ENCODE measurements at regions of chr16 and their contacts with region 1.

Region 1: GRCh38 chr16:72241930-72242329 is 70.0 kb upstream of the PMFBP1 start:
- DNase-seq: peak; percentile 48
- H3K4me3 ChIP-seq: no peak overlapping the region
- H3K27ac ChIP-seq: no peak overlapping the region
- H3K4me1 ChIP-seq: peaks cover 4% of the 10 kb centered on the region
- H3K27me3 ChIP-seq: no peaks in the 10 kb centered on the region
- CTCF ChIP-seq: peak; percentile 94 to 97

Region 2: GRCh38 chr16:72124761-72125634 is 116.9 kb before region 1 on chr16:
- CTCF ChIA-PET with region 1: no interaction called
- dilution Hi-C with region 1: no loop called
- in situ Hi-C with region 1: loop called in 1 of 2 experiments (anchors 10 kb)
- intact Hi-C with region 1: loop called (anchors 1 kb)
- DNase-seq: peak; percentile 51
- H3K4me3 ChIP-seq: no peak overlapping the region
- H3K27ac ChIP-seq: no peak overlapping the region
- H3K4me1 ChIP-seq: no peaks in the 10 kb centered on the region
- H3K27me3 ChIP-seq: no peaks in the 10 kb centered on the region
- CTCF ChIP-seq: peak; percentile 74 to 84

Region 3: GRCh38 chr16:72149676-72150464 is 92.1 kb before region 1 on chr16:
- CTCF ChIA-PET with region 1: no interaction called
- dilution Hi-C with region 1: no loop called
- in situ Hi-C with region 1: no loop called
- intact Hi-C with region 1: no loop called
- DNase-seq: no peak
- H3K4me3 ChIP-seq: no peak overlapping the region
- H3K27ac ChIP-seq: no peak overlapping the region
- H3K4me1 ChIP-seq: no peaks in the 10 kb centered on the region
- H3K27me3 ChIP-seq: no peaks in the 10 kb centered on the region
- CTCF ChIP-seq: no peak

Region 4: GRCh38 chr16:72400257-72400882 is 158.4 kb after region 1 on chr16:
- CTCF ChIA-PET with region 1: no interaction called
- dilution Hi-C with region 1: no loop called
- in situ Hi-C with region 1: no loop called
- intact Hi-C with region 1: loop called (anchors 1 kb)
- DNase-seq: peak; percentile 28
- H3K4me3 ChIP-seq: no peak overlapping the region
- H3K27ac ChIP-seq: no peak overlapping the region
- H3K4me1 ChIP-seq: no peaks in the 10 kb centered on the region
- H3K27me3 ChIP-seq: no peaks in the 10 kb centered on the region
- CTCF ChIP-seq: peak; percentile 68 to 74

Region 5: GRCh38 chr16:72664509-72665225 is 422.7 kb after region 1 on chr16:
- CTCF ChIA-PET with region 1: no interaction called
- dilution Hi-C with region 1: no loop called
- in situ Hi-C with region 1: no loop called
- intact Hi-C with region 1: loop called (anchors 10 kb)
- DNase-seq: peak; percentile 98
- H3K4me3 ChIP-seq: peak overlapping the region; percentile 74 to 85 (median 81)
- H3K27ac ChIP-seq: peak overlapping the region; percentile 86
- H3K4me1 ChIP-seq: peaks cover 10% of the 10 kb centered on the region
- H3K27me3 ChIP-seq: no peaks in the 10 kb centered on the region
- CTCF ChIP-seq: no peak

Region 6: GRCh38 chr16:73956587-73957494 is 1714.9 kb after region 1 on chr16:
- CTCF ChIA-PET with region 1: no interaction called
- dilution Hi-C with region 1: no loop called
- in situ Hi-C with region 1: no loop called
- intact Hi-C with region 1: loop called (anchors 10 kb)
- DNase-seq: peak; percentile 17
- H3K4me3 ChIP-seq: no peak overlapping the region
- H3K27ac ChIP-seq: no peak overlapping the region
- H3K4me1 ChIP-seq: no peaks in the 10 kb centered on the region
- H3K27me3 ChIP-seq: peaks cover 2% of the 10 kb centered on the region
- CTCF ChIP-seq: peak; percentile 86 to 91